ENCODE measurements at regions of chr2 and their contacts with region 1.

Region 1: DNA sequence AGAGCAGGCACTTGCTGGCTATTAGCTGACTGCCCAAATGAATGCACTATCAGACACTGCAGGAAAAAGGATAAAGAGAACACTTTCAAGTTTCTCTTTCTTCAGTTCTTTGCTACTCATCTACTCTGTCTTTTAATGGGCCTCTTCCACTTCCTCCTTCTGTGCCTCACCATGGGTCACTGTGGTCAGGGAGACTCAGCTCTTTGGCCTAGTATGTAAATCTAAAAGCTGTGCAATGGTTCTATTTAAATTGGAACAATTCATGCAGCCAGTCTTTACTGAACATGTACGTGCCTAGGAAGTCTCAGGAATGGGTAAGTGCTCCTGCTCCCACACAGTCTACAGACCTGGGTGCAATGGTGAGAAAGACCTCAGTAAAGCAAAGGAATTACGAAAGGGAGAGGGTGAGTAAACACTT is 79.1 kb upstream of the DNMT3A start:
- DNase-seq: peak; percentile 71
- H3K4me3 ChIP-seq: peak overlapping the region; percentile 65
- H3K27ac ChIP-seq: peak overlapping the region; percentile 99
- H3K4me1 ChIP-seq: peaks cover 83% of the 10 kb centered on the region
- CTCF ChIP-seq: no peak

Region 2: GRCh38 chr2:25342372-25343186 is 78.2 kb before region 1 on chr2:
- CTCF ChIA-PET with region 1: no interaction called
- POLR2A ChIA-PET with region 1: interaction called, 10 read pairs
- intact Hi-C with region 1: loop called (anchors 2 kb)
- DNase-seq: peak; percentile 84
- H3K4me3 ChIP-seq: peak overlapping the region; percentile 75
- H3K27ac ChIP-seq: no peak overlapping the region
- H3K4me1 ChIP-seq: peaks cover 11% of the 10 kb centered on the region
- CTCF ChIP-seq: peak; percentile 84

Region 3: GRCh38 chr2:25362049-25362433 is 58.8 kb before region 1 on chr2:
- CTCF ChIA-PET with region 1: interaction called, 3 read pairs
- POLR2A ChIA-PET with region 1: interaction called, 14 read pairs
- intact Hi-C with region 1: loop called (anchors 1 kb)
- DNase-seq: peak; percentile 93
- H3K4me3 ChIP-seq: peak overlapping the region; percentile 66
- H3K27ac ChIP-seq: peak overlapping the region; percentile 66
- H3K4me1 ChIP-seq: peaks cover 23% of the 10 kb centered on the region
- CTCF ChIP-seq: peak; percentile 95

Region 4: DNA sequence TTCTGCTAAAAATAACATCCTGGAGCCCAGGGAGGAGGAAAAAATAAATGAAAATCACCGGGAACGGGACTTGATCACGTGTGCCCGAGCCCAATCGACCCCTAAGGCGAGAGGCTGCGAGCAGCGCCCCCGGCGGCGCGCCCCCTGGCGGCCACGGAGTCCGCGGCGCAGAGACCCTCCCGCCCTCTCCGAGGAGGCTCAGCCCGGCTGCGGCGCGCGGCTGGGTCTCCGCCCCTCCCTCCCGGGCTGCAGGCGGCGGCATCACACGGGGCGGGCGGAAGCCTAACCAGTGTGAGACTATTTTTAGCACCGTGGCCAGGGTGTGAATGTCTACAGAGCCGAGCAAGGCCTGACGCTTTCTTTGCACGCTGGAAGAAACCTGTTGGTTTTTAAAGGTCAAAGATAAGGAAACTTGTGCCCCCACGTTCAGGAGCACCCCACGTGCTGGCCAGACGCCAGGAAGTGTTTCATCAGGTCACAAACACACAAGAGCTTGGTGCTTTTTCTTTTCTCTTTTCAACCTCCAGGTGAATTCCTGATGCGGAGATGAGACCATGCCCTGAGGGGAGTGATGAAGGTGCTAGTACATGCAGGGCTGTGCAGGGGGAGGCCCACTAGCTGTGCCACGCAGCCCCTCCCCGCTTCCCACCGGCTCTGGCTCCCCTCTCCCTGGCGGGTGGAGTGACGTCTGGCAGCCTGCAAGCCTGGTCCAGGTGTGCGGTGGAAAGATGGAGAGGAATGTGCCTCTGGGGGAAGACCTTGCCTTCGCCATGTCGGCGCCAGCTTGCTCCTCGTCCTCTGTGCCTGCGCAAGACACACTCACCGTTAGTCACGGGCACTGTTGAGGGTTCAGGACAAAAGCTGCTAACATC is 43.8 kb before region 1 on chr2:
- CTCF ChIA-PET with region 1: interaction called, 6 read pairs
- POLR2A ChIA-PET with region 1: interaction called, 7 read pairs
- intact Hi-C with region 1: loop called (anchors 1 kb)
- DNase-seq: peak; percentile 98
- H3K4me3 ChIP-seq: peak overlapping the region; percentile 31
- H3K27ac ChIP-seq: peak overlapping the region; percentile 82
- H3K4me1 ChIP-seq: peaks cover 61% of the 10 kb centered on the region
- CTCF ChIP-seq: peak; percentile 97

Region 5: GRCh38 chr2:25402477-25402876 is 18.4 kb before region 1 on chr2:
- CTCF ChIA-PET with region 1: interaction called, 18 read pairs
- POLR2A ChIA-PET with region 1: interaction called, 110 read pairs
- intact Hi-C with region 1: loop called (anchors 1 kb)
- DNase-seq: peak; percentile 96
- H3K4me3 ChIP-seq: peak overlapping the region; percentile 39
- H3K27ac ChIP-seq: peak overlapping the region; percentile 97
- H3K4me1 ChIP-seq: peaks cover 99% of the 10 kb centered on the region
- CTCF ChIP-seq: no peak

Region 6: GRCh38 chr2:25483601-25484266 is 62.9 kb after region 1 on chr2:
- CTCF ChIA-PET with region 1: no interaction called
- POLR2A ChIA-PET with region 1: interaction called, 7 read pairs
- intact Hi-C with region 1: loop called (anchors 1 kb)
- DNase-seq: peak; percentile 79
- H3K4me3 ChIP-seq: peak overlapping the region; percentile 12
- H3K27ac ChIP-seq: peak overlapping the region; percentile 69
- H3K4me1 ChIP-seq: peaks cover 45% of the 10 kb centered on the region
- CTCF ChIP-seq: no peak

Region 7: DNA sequence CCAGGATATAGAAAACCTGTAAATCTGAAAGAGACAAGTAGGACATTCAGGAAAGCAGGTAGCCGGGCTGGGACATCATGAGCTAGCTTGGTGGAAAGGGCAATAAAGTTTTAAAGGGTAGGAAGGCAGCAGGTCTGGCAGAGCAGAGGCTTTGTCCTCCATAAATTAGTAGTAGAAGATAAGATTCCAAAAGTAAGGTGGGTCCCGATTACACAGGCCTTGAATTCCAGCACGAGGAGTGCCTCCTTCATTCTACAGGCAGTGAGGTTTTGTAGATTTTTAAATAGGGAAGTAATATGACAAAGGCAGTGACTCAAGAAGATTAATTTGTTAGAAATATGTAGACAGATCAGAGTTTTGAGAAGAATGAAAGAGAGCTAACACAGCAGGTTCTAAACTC is 91.9 kb after region 1 on chr2:
- CTCF ChIA-PET with region 1: no interaction called
- POLR2A ChIA-PET with region 1: interaction called, 6 read pairs
- intact Hi-C with region 1: loop called (anchors 2 kb)
- DNase-seq: no peak
- H3K4me3 ChIP-seq: no peak overlapping the region
- H3K27ac ChIP-seq: no peak overlapping the region
- H3K4me1 ChIP-seq: peaks cover 29% of the 10 kb centered on the region
- CTCF ChIP-seq: no peak

Measured in OCI-LY7 (cell line).